ENCODE measurements at regions of chr12 and their contacts with region 1.

Region 1: GRCh38 chr12:110860833-110861296 is 14.1 kb downstream of the CCDC63 start:
- DNase-seq: no peak
- H3K4me3 ChIP-seq: no peak overlapping the region
- H3K27ac ChIP-seq: peak overlapping the region; percentile 50; the same call in 1 of the 2 replicates
- H3K4me1 ChIP-seq: peaks cover 0 to 23% (median 5%) of the 10 kb centered on the region in 4 experiments; a peak in 5 of 7 replicates
- H3K27me3 ChIP-seq: no peaks in the 10 kb centered on the region
- CTCF ChIP-seq: no peak
- EP300 ChIP-seq: no peak
- POLR2A ChIP-seq: no peak
- RAD21 ChIP-seq: no peak

Region 2: GRCh38 chr12:110836291-110836690 is 24.6 kb before region 1 on chr12:
- CTCF ChIA-PET with region 1: no interaction called
- POLR2A ChIA-PET with region 1: no interaction called
- DNase-seq: no peak
- H3K4me3 ChIP-seq: no peak overlapping the region
- H3K27ac ChIP-seq: no peak overlapping the region
- H3K4me1 ChIP-seq: no peaks in the 10 kb centered on the region
- H3K27me3 ChIP-seq: no peaks in the 10 kb centered on the region
- CTCF ChIP-seq: no peak
- EP300 ChIP-seq: no peak
- POLR2A ChIP-seq: no peak
- RAD21 ChIP-seq: no peak

Region 3: GRCh38 chr12:110846615-110847566 is 14.0 kb before region 1 on chr12 and contains the start of gene CCDC63:
- CTCF ChIA-PET with region 1: interaction called, 10 read pairs
- POLR2A ChIA-PET with region 1: interaction called, 7 read pairs
- DNase-seq: peak; percentile 25 to 83
- H3K4me3 ChIP-seq: peak within 1 kb of the TSS; percentile 66 to 85 (median 76)
- H3K27ac ChIP-seq: peak within 1 kb of the TSS; percentile 77
- H3K4me1 ChIP-seq: peaks cover 2 to 7% (median 5%) of the 10 kb centered on the region in 4 experiments; a peak in 6 of 7 replicates
- H3K27me3 ChIP-seq: peaks cover 0 to 3% (median under 1%) of the 10 kb centered on the region in 4 experiments; a peak in 1 of 7 replicates
- CTCF ChIP-seq: peak; percentile 41 to 49 (median 41); a peak in 3 of 4 replicates
- EP300 ChIP-seq: no peak
- POLR2A ChIP-seq: peak in 1 of 2 experiments; percentile 59; a peak in 2 of 3 replicates
- RAD21 ChIP-seq: peak in 1 of 2 experiments; percentile 32; a peak in 3 of 4 replicates
- total RNA-seq, gene CCDC63: 0.55 and 0.93 TPM in 2 replicates

Region 4: DNA sequence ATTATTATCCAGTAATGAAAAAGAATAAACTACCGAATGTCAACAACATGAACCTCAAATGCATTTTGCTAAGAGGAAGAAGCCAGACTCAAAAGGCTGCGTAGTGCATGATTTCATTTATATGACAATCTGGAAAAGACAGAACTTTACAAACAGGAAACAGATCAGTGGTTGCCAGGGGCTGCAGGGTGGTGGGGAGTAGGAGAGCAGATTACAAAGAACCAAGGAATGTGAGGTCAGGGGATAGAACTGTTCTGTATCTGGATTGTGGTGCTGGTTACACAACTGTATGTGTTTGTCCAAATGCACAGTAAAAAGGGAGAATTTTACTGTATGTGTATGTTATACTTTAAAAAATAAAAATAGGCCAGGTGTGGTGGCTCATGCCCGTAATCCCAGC is 149.2 kb after region 1 on chr12:
- CTCF ChIA-PET with region 1: no interaction called
- POLR2A ChIA-PET with region 1: no interaction called
- DNase-seq: no peak
- H3K4me3 ChIP-seq: no peak overlapping the region
- H3K27ac ChIP-seq: no peak overlapping the region
- H3K4me1 ChIP-seq: no peaks in the 10 kb centered on the region
- H3K27me3 ChIP-seq: peaks cover 0 to 3% (median 0%) of the 10 kb centered on the region in 4 experiments; a peak in 1 of 7 replicates
- CTCF ChIP-seq: no peak
- EP300 ChIP-seq: no peak
- POLR2A ChIP-seq: no peak
- RAD21 ChIP-seq: no peak

Measured in H1 (cell line).